ENCODE measurements at regions of chr11 and their contacts with region 1.

Region 1: DNA sequence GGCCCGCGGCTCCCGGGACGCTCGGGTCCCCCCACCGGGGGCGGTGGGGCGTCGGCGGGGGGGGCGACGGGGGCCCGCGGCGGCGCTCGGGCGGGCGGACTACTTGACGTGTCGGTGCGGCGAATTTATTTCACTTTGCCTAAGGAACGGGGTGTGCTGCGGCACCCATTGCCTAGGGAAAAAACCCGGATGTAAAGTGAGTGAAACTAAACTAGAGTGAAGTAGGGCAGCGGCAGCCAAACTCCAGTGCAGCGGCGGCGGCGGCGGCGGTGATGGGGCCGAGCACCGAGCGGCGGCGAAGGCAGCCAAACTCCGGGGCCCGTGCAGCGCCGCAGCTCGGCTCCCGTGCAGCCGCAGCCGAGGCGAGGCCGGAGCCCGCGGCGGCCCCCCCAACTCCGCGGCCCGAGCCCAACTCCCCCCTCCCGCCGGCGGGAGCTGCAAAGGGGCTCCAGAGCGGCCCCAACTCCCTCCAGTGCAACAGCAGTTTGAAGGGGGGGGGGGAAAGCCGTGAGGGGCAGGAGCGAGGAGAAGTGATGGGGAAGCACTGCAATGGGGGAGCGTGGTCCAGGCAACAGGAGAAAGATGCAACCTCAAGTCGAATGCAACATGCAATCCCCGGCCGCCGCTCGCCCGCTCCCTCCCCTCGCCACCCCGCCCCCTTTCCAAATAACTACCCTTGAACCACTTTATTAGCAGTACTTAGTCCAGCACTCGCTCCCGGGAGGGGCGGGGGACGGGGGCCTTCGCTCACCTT is 647 bp upstream of the PHF21A start:
- DNase-seq: no peak
- ATAC-seq: peak; percentile 47
- H3K4me3 Mint-ChIP-seq: peak overlapping the region; percentile 87
- H3K27ac Mint-ChIP-seq: peak overlapping the region; percentile 91
- H3K4me1 Mint-ChIP-seq: peaks cover 30% of the 10 kb centered on the region
- H3K27me3 Mint-ChIP-seq: no peaks in the 10 kb centered on the region
- CTCF ChIP-seq: no peak

Region 2: GRCh38 chr11:46100670-46101069 is 21.2 kb before region 1 on chr11:
- CTCF ChIA-PET with region 1: interaction called, 3 read pairs
- POLR2A ChIA-PET with region 1: interaction called, 3 read pairs
- intact Hi-C with region 1: loop called (anchors 2 kb)
- DNase-seq: no peak
- ATAC-seq: peak; percentile 21
- H3K4me3 Mint-ChIP-seq: peak overlapping the region; percentile 24
- H3K27ac Mint-ChIP-seq: peak overlapping the region; percentile 37
- H3K4me1 Mint-ChIP-seq: peaks cover 38% of the 10 kb centered on the region
- H3K27me3 Mint-ChIP-seq: no peaks in the 10 kb centered on the region
- CTCF ChIP-seq: no peak

Region 3: DNA sequence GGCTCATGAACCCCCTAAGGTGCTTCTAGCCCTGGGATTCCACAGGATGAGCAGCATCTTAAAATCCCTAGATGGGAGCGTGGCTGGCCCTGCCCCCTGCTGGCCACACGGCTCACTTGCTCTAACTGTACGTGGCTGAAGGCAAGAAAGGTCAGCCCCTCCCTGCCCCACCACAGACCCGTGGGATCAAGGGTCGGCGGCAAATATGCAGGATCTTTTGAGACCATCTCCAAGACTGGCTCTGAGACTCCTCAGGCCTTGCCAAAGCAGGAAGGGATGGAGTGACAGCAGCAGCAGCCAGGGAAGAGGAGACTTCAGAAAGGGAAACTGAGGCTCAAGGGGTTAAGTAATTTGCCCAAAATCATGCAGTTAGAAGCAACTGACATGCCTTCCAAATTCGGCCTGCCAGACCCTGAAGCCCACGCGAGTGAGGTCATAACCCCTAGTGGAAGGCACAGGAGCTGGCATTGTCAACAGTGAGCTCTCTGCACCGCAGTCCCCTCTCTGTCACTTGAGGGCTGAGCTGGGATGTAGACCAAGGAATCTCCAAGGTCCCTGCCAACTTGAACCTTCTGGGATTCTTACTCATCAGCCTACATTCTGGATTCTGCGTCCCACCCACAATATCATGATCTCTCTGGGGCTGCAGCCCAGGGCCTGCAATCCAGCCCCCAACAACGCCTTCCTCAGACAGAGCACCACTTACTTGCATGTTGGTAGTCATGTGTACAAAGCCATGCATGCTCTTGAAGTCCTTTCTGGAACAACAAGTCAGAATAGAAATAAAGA is 186.9 kb after region 1 on chr11:
- CTCF ChIA-PET with region 1: no interaction called
- POLR2A ChIA-PET with region 1: no interaction called
- intact Hi-C with region 1: loop called (anchors 10 kb)
- DNase-seq: peak; percentile 42
- ATAC-seq: peak; percentile 55
- H3K4me3 Mint-ChIP-seq: no peak overlapping the region
- H3K27ac Mint-ChIP-seq: no peak overlapping the region
- H3K4me1 Mint-ChIP-seq: peaks cover 9% of the 10 kb centered on the region
- H3K27me3 Mint-ChIP-seq: peaks cover 24% of the 10 kb centered on the region
- CTCF ChIP-seq: no peak

Measured in activated B cell treated with CpG ODN at 0.5 μM for 24 hours (primary cell).